ENCODE measurements at regions of chr2 and their contacts with region 1.

Region 1: GRCh38 chr2:189412330-189412953 is 28.8 kb upstream of the WDR75 start:
- DNase-seq: no peak
- H3K4me3 ChIP-seq: no peak overlapping the region
- H3K27ac ChIP-seq: peak overlapping the region; percentile 74 to 76
- H3K4me1 ChIP-seq: peaks cover 0 to 19% of the 10 kb centered on the region in 2 donors
- H3K27me3 ChIP-seq: no peaks in the 10 kb centered on the region
- CTCF ChIP-seq: peak; percentile 67 to 75 (median 72)

Region 2: DNA sequence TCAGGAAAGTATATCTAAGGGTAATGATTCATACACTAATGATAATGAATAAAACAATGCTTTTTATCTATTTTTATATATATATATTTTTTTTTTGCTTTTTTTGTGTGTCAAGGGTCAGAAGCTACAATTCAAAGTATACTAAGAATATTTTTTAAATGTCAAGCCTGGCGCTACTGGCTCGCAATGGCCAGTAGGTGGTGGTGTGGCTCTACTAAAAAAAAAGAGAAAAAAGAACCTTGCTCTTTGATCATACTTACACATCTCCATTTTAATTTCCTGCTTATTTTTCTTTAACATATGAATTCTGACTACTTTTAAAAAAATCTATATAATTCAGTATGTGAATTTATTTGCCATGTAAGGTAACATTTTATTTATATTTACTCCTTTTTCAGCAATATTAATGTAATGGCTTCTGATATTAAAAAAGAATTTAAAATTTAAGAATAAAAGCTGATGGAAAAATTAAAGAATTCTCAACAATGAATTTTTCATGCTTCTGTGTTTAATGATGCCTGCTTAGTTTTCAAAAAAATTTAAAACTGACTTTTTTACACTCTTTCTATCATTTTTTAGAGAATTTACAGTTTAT is 887.8 kb before region 1 on chr2:
- intact Hi-C with region 1: loop called (anchors 5 kb)
- DNase-seq: no peak
- H3K4me3 ChIP-seq: no peak overlapping the region
- H3K27ac ChIP-seq: peak overlapping the region in 1 of 2 donors; percentile 4
- H3K4me1 ChIP-seq: peaks cover 0 to 13% of the 10 kb centered on the region in 2 donors
- H3K27me3 ChIP-seq: no peaks in the 10 kb centered on the region
- CTCF ChIP-seq: peak; percentile 46 to 83 (median 76)

Region 3: GRCh38 chr2:188978291-188979081 is 434.0 kb before region 1 on chr2:
- intact Hi-C with region 1: loop called (anchors 5 kb)
- DNase-seq: no peak
- H3K4me3 ChIP-seq: peak overlapping the region; percentile 53 to 73
- H3K27ac ChIP-seq: peak overlapping the region; percentile 83 to 85
- H3K4me1 ChIP-seq: peaks cover 3 to 23% of the 10 kb centered on the region in 2 donors
- H3K27me3 ChIP-seq: no peaks in the 10 kb centered on the region
- CTCF ChIP-seq: peak in 2 of 3 experiments; percentile 46 to 57

Region 4: GRCh38 chr2:189096769-189097447 is 315.5 kb before region 1 on chr2:
- intact Hi-C with region 1: loop called (anchors 1 kb)
- DNase-seq: no peak
- H3K4me3 ChIP-seq: no peak overlapping the region
- H3K27ac ChIP-seq: no peak overlapping the region
- H3K4me1 ChIP-seq: peaks cover 0 to 19% of the 10 kb centered on the region in 2 donors
- H3K27me3 ChIP-seq: no peaks in the 10 kb centered on the region
- CTCF ChIP-seq: no peak

Region 5: DNA sequence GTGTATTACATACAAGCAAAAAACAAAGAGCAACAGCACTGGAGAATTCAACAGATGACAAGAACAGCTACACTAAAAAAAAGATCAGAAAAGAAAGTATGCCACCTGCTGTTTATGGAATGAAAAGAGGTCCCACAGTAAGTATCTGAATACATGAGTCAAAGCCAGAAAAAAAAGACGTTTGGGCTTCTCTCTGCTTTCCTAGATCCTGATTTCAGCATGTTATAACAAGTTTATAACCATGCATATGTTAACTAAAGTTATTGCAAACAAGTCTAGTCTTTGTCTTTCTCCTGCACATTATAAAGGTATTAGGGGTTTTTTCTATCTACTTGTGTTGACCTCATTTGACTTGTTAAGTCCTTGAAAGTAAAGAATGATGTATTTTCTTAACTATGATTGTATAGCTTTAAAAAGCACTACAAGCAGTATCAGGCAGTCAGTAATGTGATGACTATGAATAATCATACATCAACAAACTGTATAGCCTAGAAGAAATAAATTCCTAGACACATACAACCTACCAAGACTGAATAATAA is 124.4 kb before region 1 on chr2:
- intact Hi-C with region 1: loop called (anchors 5 kb)
- DNase-seq: no peak
- H3K4me3 ChIP-seq: no peak overlapping the region
- H3K27ac ChIP-seq: no peak overlapping the region
- H3K4me1 ChIP-seq: peaks cover 2 to 11% of the 10 kb centered on the region in 2 donors
- H3K27me3 ChIP-seq: no peaks in the 10 kb centered on the region
- CTCF ChIP-seq: peak; percentile 29 to 66 (median 52)

Region 6: DNA sequence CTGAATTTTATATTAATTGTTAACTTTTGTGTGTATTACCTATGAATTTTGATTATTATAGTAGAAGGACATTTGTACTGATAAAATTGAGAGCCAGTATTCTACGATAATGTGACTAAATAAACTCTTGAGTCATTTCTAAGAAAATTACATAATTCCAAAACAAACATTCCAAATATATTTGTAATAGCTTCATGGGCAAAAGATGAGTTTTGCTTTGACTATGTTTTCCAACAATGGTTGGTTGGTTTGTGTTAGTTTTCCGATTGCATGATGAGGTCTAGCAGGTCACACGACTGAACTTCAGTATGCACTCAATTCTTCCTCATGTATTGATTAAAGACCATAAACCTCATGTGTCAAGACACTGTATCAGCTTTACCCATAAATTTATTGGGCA is 42.9 kb before region 1 on chr2:
- intact Hi-C with region 1: loop called (anchors 2 kb)
- DNase-seq: no peak
- H3K4me3 ChIP-seq: no peak overlapping the region
- H3K27ac ChIP-seq: peak overlapping the region; percentile 71 to 81
- H3K4me1 ChIP-seq: peaks cover 0 to 29% of the 10 kb centered on the region in 2 donors
- H3K27me3 ChIP-seq: no peaks in the 10 kb centered on the region
- CTCF ChIP-seq: no peak

Measured in ascending aorta (tissue), 2 donors.